Heart left ventricle (tissue), 16 donors: ENCODE measurements at regions of chr7 and their contacts with region 1.

Region 1: DNA sequence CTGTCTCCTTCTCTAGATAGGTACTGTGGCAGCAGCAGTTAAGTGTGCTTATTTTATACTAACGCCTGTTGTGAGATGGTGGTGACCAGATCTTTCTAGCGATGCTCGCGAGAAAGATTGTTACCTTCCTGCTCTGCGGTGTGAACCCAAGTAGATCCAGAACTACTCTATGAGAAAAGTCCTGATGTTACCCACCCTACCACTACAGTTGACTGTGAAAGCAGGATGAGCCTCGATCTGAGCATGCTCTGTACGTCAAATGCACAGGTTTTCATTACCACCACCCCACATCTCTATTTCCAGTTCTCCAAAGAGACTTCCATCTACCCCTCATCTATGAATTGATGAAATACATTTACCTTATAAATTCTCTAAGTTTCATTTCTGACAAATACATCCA is 64.6 kb upstream of the KCTD7 start:
- DNase-seq: no peak
- ATAC-seq: no peak
- H3K4me3 ChIP-seq: no peak overlapping the region
- H3K27ac ChIP-seq: no peak overlapping the region
- H3K4me1 ChIP-seq: no peaks in the 10 kb centered on the region
- H3K27me3 ChIP-seq: no peaks in the 10 kb centered on the region
- CTCF ChIP-seq: no peak
- POLR2A ChIP-seq: no peak

Region 2: DNA sequence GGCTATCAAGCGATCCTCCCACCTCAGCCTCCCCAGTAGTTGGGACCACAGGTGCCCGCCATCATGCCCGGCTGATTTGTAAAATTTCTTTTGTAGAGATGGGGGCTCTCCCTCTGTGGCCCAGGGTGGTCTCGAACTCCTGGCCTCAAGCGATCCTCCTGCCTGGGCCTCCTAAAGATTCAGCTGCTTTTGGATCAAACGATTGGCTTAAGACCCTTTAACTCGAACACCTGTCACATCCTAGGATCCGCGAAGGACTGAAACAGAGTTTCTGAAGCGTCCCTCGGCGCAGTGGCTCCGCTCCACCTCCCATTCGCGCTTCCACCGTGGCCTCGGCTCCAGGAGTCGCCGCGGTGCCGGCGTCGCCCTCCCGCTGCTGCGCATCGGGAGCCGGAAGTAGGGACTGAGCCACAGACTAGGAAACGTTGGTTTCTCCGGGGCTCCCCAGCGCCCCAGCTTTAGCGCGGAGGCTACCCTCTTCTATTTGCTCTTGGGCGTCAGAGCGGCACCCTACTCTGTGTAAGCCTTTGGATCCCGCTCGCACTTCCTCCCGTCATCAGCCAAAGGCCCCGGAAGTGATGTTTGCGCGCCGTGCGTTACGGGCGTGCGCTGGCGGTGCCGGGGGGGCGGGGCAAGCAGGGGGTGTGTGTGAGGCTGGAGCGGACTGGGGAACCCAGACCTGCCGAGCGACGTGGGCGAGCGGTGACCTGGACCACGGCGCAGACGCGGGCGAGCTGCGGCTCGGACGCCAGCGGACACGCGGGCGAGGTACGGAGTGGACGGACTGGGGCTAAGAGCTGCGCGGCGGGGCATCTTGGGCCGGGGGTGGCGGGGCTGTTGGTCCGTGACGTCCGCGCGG is 117.7 kb after region 1 on chr7:
- intact Hi-C with region 1: loop called in 1 of 10 experiments (anchors 10 kb)
- DNase-seq: peak; percentile 97 to 98 (median 98)
- ATAC-seq: peak; percentile 99 to 100 (median 99)
- H3K4me3 ChIP-seq: peak overlapping the region; percentile 66 to 98 (median 92)
- H3K27ac ChIP-seq: peak overlapping the region; percentile 87 to 99 (median 96)
- H3K4me1 ChIP-seq: peaks cover 0 to 33% (median 13%) of the 10 kb centered on the region in 12 donors
- H3K27me3 ChIP-seq: no peaks in the 10 kb centered on the region
- CTCF ChIP-seq: no peak
- POLR2A ChIP-seq: peak; percentile 74 to 94

Region 3: GRCh38 chr7:66790196-66790595 is 226.2 kb after region 1 on chr7:
- intact Hi-C with region 1: loop called in 3 of 10 experiments (anchors 2 to 5 kb)
- DNase-seq: no peak
- ATAC-seq: peak in 2 of 4 donors; percentile 20 to 29
- H3K4me3 ChIP-seq: no peak overlapping the region
- H3K27ac ChIP-seq: no peak overlapping the region
- H3K4me1 ChIP-seq: no peaks in the 10 kb centered on the region
- H3K27me3 ChIP-seq: no peaks in the 10 kb centered on the region
- CTCF ChIP-seq: no peak
- POLR2A ChIP-seq: no peak